ENCODE measurements at regions of chr1 and their contacts with region 1.

Region 1: DNA sequence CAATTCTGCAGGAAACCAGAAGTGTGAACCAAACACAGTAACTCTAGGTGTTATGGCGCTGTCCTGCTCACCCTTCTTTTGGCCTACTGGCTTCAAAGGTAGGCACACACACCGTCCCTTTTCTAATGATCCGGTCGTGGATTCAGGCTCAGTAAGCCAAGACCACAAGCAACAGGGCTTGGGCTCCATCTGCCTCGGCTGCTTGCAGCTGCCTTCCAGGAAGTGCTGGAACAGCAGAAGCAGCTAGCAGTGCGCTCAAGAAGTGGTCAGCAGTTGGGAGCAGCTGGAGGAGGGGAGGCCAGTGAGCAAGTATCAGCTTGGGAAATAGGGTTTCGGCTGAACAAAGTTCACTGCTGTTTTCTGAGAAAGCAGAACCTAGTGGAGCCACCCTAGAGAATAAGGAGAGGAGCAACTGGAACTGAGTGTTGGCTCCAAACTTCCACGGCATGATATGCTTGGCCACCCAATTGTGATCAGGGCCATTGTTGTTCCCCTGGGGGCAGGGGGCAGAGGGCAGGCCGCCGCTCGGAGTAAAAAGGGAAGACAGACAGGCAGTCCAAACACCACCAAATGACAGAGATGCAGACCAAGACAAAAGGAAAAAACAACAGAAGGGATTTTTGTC is 173.4 kb downstream of the TOMM20 start:
- DNase-seq: no peak
- H3K4me3 ChIP-seq: no peak overlapping the region
- H3K27ac ChIP-seq: no peak overlapping the region; the same call in 1 of the 2 replicates
- H3K4me1 ChIP-seq: peaks cover 0 to 17% (median 11%) of the 10 kb centered on the region in 4 experiments; a peak in 6 of 7 replicates
- H3K27me3 ChIP-seq: no peaks in the 10 kb centered on the region; a peak in 2 of 7 replicates
- CTCF ChIP-seq: no peak
- EP300 ChIP-seq: no peak
- POLR2A ChIP-seq: no peak
- RAD21 ChIP-seq: no peak

Region 2: GRCh38 chr1:234970731-234971476 is 15.7 kb after region 1 on chr1:
- CTCF ChIA-PET with region 1: interaction called, 4 read pairs
- POLR2A ChIA-PET with region 1: interaction called, 43 read pairs
- DNase-seq: peak; percentile 57 to 68
- H3K4me3 ChIP-seq: peak overlapping the region in 2 of 4 experiments; percentile 19 to 41; a peak in 3 of 8 replicates
- H3K27ac ChIP-seq: peak overlapping the region; percentile 59
- H3K4me1 ChIP-seq: peaks cover 8 to 31% (median 27%) of the 10 kb centered on the region in 4 experiments
- H3K27me3 ChIP-seq: peaks cover 0 to 4% (median 1%) of the 10 kb centered on the region in 4 experiments; a peak in 3 of 7 replicates
- CTCF ChIP-seq: no peak
- EP300 ChIP-seq: peak in 1 of 2 experiments; percentile 15; a peak in 1 of 3 replicates
- POLR2A ChIP-seq: peak in 1 of 2 experiments; percentile 58; a peak in 2 of 3 replicates
- RAD21 ChIP-seq: peak in 1 of 2 experiments; percentile 7; a peak in 1 of 4 replicates

Region 3: GRCh38 chr1:234989479-234990327 is 34.5 kb after region 1 on chr1:
- CTCF ChIA-PET with region 1: no interaction called
- POLR2A ChIA-PET with region 1: no interaction called
- DNase-seq: no peak
- H3K4me3 ChIP-seq: no peak overlapping the region
- H3K27ac ChIP-seq: no peak overlapping the region
- H3K4me1 ChIP-seq: peaks cover 3 to 10% (median 7%) of the 10 kb centered on the region in 4 experiments; a peak in 6 of 7 replicates
- H3K27me3 ChIP-seq: no peaks in the 10 kb centered on the region
- CTCF ChIP-seq: no peak
- EP300 ChIP-seq: no peak
- POLR2A ChIP-seq: no peak
- RAD21 ChIP-seq: no peak